Mammary epithelial cell (primary cell): ENCODE measurements at regions of chr19 and their contacts with region 1.

Region 1: DNA sequence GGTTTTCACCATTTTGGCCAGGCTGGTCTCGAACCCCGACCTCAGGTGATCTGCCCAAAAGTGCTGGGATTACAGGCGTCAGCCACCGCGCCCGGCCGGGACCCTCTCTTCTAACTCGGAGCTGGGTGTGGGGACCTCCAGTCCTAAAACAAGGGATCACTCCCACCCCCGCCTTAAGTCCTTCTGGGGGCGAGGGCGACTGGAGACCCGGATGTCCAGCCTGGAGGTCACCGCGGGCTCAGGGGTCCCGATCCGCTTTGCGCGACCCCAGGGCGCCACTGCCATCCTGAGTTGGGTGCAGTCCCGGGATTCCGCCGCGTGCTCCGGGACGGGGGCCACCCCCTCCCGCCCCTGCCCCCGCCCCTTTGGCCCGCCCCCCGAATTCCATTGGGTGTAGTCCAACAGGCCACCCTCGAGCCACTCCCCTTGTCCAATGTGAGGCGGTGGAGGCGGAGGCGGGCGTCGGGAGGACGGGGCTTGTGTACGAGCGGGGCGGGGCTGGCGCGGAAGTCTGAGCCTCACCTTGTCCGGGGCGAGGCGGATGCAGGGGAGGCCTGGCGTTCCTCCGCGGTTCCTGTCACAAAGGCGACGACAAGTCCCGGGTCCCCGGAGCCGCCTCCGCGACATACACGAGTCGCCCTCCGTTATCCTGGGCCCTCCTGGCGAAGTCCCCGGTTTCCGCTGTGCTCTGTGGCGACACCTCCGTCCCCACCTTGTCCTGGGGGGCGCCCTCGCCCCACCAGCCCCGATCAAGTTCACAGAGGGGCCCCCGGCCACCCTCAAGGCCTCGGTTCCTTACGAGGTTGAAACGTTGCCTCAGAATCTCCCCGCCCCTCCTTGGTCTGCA is 1.0 kb downstream of the LDLR start:
- DNase-seq: peak; percentile 93
- H3K4me3 ChIP-seq: peak overlapping the region; percentile 85 to 89 (median 87)
- H3K27ac ChIP-seq: peak overlapping the region; percentile 100
- H3K4me1 ChIP-seq: peaks cover 32% of the 10 kb centered on the region
- H3K27me3 ChIP-seq: no peaks in the 10 kb centered on the region
- CTCF ChIP-seq: no peak

Region 2: GRCh38 chr19:10870955-10871603 is 219.2 kb before region 1 on chr19 and contains the start of gene CARM1:
- CTCF ChIA-PET with region 1: no interaction called
- dilution Hi-C with region 1: no loop called
- in situ Hi-C with region 1: no loop called
- intact Hi-C with region 1: loop called (anchors 10 kb)
- DNase-seq: peak; percentile 97
- H3K4me3 ChIP-seq: peak within 1 kb of the TSS; percentile 78 to 90 (median 85)
- H3K27ac ChIP-seq: peak within 1 kb of the TSS; percentile 51
- H3K4me1 ChIP-seq: peaks cover 4% of the 10 kb centered on the region
- H3K27me3 ChIP-seq: no peaks in the 10 kb centered on the region
- CTCF ChIP-seq: peak; percentile 49 to 60
- total RNA-seq, gene CARM1: 29.2 to 58.5 TPM

Region 3: DNA sequence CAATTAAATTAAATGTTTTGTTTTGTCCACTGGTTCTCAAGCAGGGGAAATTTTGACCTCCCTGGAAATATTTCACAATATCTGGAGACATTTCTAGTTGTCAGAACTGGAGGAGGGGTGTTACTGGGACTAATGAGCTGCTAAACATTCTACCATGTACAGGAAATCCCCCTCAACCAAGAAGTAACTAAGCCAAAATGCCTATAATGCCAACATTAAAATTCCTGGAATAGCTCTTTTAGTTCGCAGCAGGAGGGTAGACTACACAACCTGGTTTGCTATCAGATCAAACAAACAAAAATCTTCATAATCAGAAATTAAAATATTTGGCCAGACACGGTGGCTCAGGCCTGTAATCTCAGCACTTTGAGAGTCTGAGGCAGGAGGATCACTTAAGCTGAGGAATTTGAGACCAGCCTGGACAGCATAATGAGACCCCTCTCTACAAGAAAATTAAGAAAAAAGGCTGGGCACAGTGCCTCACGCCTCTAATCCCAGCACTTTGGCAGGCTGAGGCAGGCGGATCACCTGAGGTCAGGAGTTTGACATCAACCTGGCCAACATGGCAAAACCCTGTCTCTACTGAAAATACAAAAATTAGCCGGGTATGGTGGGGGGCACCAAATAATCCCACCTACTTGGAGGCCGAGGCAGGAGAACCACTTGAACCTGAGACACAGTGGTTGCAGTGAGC is 143.2 kb before region 1 on chr19:
- CTCF ChIA-PET with region 1: no interaction called
- dilution Hi-C with region 1: no loop called
- in situ Hi-C with region 1: no loop called
- intact Hi-C with region 1: loop called (anchors 2 kb)
- DNase-seq: no peak
- H3K4me3 ChIP-seq: no peak overlapping the region
- H3K27ac ChIP-seq: no peak overlapping the region
- H3K4me1 ChIP-seq: no peaks in the 10 kb centered on the region
- H3K27me3 ChIP-seq: no peaks in the 10 kb centered on the region
- CTCF ChIP-seq: no peak

Region 4: DNA sequence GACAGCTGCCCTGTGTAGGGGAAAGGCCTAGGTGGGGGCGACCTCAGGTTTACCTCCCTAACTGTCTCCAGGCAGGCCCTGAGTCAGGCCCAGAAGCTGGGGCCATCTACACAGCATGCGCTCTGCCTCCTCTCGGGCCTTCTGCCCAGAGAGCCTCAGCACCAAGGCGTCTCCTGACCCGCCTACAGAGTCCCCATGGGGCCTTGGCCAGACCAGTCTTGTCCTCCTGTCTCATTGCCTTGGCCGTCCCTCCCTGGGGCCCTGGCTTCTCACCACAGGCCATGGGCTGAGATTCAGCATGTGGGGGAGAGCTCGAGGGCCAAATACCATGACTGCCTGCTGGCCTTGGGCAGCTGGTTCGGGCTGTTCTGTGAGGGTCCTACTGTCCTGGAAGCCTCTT is 70.5 kb before region 1 on chr19:
- CTCF ChIA-PET with region 1: no interaction called
- dilution Hi-C with region 1: loop called (anchors 10 kb)
- in situ Hi-C with region 1: no loop called
- intact Hi-C with region 1: no loop called
- DNase-seq: no peak
- H3K4me3 ChIP-seq: no peak overlapping the region
- H3K27ac ChIP-seq: no peak overlapping the region
- H3K4me1 ChIP-seq: peaks cover 8% of the 10 kb centered on the region
- H3K27me3 ChIP-seq: no peaks in the 10 kb centered on the region
- CTCF ChIP-seq: no peak

Region 5: GRCh38 chr19:11035441-11036377 is 54.6 kb before region 1 on chr19:
- CTCF ChIA-PET with region 1: interaction called, 3 read pairs
- dilution Hi-C with region 1: no loop called
- in situ Hi-C with region 1: loop called in 1 of 2 experiments (anchors 5 kb)
- intact Hi-C with region 1: loop called (anchors 1 kb)
- DNase-seq: peak; percentile 80
- H3K4me3 ChIP-seq: no peak overlapping the region
- H3K27ac ChIP-seq: no peak overlapping the region
- H3K4me1 ChIP-seq: peaks cover 13% of the 10 kb centered on the region
- H3K27me3 ChIP-seq: no peaks in the 10 kb centered on the region
- CTCF ChIP-seq: peak; percentile 88 to 98

Region 6: GRCh38 chr19:11264452-11265176 is 174.3 kb after region 1 on chr19:
- CTCF ChIA-PET with region 1: no interaction called
- dilution Hi-C with region 1: no loop called
- in situ Hi-C with region 1: no loop called
- intact Hi-C with region 1: loop called (anchors 1 kb)
- DNase-seq: no peak
- H3K4me3 ChIP-seq: no peak overlapping the region
- H3K27ac ChIP-seq: no peak overlapping the region
- H3K4me1 ChIP-seq: peaks cover 27% of the 10 kb centered on the region
- H3K27me3 ChIP-seq: no peaks in the 10 kb centered on the region
- CTCF ChIP-seq: no peak